Activated CD4-positive, alpha-beta memory T cell treated with anti-CD3 and anti-CD28 coated beads for 36 hours (primary cell): ENCODE measurements at regions of chr4 and their contacts with region 1.

Region 1: GRCh38 chr4:152500800-152501434 is 35.0 kb downstream of the FBXW7 start:
- DNase-seq: peak; percentile 22
- H3K4me3 Mint-ChIP-seq: no peak overlapping the region
- H3K27ac Mint-ChIP-seq: no peak overlapping the region
- H3K4me1 Mint-ChIP-seq: peaks cover 22% of the 10 kb centered on the region
- H3K27me3 Mint-ChIP-seq: no peaks in the 10 kb centered on the region

Region 2: DNA sequence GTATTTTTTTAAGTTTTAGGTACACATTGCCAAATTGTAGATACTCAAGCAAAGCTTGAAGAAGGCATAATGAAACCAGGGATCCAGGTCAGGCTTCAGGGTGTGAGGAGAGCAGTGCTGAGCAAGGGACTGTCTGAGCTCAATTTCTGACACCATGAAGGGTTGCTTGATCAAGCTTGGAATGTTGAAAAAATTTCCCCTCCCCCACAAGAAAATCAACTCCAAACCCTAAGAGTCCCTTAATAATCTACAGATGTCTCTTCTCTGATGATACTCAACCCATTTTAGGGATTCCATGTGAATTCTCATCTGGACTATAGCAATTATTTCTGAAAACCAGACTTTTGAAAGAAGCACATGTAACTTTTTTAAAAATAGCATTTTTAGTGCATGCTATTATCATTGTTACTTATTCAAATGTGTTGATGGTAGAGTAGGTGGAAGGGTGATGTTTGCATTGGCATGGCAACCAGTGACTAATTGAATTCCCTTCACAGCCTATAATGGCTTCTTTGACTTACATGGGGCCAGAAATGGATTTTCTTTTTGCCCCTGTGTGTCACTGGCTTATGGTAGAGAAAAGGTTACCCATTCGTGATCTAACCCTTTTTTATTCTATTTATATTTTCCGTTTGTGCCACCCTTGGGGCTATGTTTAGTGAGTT is 217.0 kb before region 1 on chr4:
- CTCF ChIA-PET with region 1: no interaction called
- POLR2A ChIA-PET with region 1: no interaction called
- intact Hi-C with region 1: no loop called
- DNase-seq: no peak
- H3K4me3 Mint-ChIP-seq: no peak overlapping the region
- H3K27ac Mint-ChIP-seq: no peak overlapping the region
- H3K4me1 Mint-ChIP-seq: peaks cover 19% of the 10 kb centered on the region
- H3K27me3 Mint-ChIP-seq: no peaks in the 10 kb centered on the region

Region 3: DNA sequence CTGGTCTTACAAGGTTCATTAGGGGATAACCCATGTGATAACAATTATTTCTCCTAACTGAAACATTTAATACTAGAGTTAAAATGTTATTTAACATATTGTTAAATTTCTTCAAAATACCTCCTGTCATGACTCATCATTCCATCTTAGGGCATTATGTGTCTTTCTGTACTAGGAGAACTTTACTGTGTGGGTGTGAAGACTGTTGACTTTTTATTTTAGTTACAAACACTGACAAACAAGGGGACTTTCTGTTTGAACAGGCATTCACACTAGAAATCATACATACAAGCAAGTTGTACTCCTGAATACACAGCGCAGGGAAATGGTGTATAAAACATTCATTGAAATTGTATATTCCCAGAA is 140.9 kb before region 1 on chr4:
- CTCF ChIA-PET with region 1: no interaction called
- POLR2A ChIA-PET with region 1: no interaction called
- intact Hi-C with region 1: no loop called
- DNase-seq: no peak
- H3K4me3 Mint-ChIP-seq: no peak overlapping the region
- H3K27ac Mint-ChIP-seq: no peak overlapping the region
- H3K4me1 Mint-ChIP-seq: peaks cover 12% of the 10 kb centered on the region
- H3K27me3 Mint-ChIP-seq: no peaks in the 10 kb centered on the region

Region 4: DNA sequence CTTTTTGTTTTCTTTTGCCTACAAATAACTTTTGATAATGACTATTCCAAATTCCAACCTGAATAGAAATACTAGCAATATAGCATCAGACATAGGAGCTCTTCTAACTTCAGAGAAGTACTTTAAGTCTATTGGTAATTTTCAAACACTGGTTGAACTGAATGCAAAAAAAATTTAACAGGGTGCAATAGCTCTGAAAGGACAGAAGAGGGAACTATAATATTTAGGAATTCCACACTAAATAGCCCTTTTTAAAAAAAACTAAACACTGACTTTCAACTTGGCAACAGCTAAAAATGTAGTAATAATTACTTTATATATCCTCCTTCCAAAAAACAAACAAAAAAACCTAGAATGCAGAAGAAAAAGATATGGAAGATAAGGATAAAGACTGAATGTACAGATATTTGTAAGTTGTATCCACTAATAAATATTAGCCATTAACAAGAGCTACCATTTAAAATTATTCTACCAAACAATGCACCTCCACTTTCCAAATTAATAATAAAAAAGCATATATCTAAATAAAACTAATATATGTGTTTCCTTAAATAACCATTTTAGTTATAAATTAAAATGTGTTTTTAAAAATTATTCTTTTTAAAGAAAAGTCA is 46.4 kb before region 1 on chr4:
- CTCF ChIA-PET with region 1: interaction called, 17 read pairs
- POLR2A ChIA-PET with region 1: no interaction called
- intact Hi-C with region 1: loop called (anchors 5 kb)
- DNase-seq: no peak
- H3K4me3 Mint-ChIP-seq: no peak overlapping the region
- H3K27ac Mint-ChIP-seq: no peak overlapping the region
- H3K4me1 Mint-ChIP-seq: peaks cover 33% of the 10 kb centered on the region
- H3K27me3 Mint-ChIP-seq: no peaks in the 10 kb centered on the region

Region 5: DNA sequence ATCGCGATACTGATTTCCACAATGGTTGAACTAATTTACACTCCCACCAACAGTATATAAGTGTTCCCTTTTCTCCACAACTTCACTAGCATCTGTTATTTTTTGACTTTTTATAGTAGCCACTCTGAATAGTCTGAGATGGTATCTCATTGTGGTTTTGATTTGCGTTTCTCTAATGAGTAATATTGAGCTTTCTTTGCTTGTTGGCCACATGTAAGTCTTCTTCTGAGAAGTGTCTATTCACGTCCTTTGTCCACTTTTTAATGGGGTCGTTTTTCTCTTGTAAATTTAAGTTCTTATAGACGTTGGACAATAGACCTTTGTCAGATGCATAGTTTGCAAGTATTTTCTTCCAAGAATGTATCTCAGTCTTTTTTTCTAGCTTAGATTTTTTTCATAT is 25.0 kb after region 1 on chr4:
- CTCF ChIA-PET with region 1: interaction called, 28 read pairs
- POLR2A ChIA-PET with region 1: interaction called, 3 read pairs
- intact Hi-C with region 1: no loop called
- DNase-seq: no peak
- H3K4me3 Mint-ChIP-seq: no peak overlapping the region
- H3K27ac Mint-ChIP-seq: no peak overlapping the region
- H3K4me1 Mint-ChIP-seq: peaks cover 64% of the 10 kb centered on the region
- H3K27me3 Mint-ChIP-seq: no peaks in the 10 kb centered on the region

Region 6: DNA sequence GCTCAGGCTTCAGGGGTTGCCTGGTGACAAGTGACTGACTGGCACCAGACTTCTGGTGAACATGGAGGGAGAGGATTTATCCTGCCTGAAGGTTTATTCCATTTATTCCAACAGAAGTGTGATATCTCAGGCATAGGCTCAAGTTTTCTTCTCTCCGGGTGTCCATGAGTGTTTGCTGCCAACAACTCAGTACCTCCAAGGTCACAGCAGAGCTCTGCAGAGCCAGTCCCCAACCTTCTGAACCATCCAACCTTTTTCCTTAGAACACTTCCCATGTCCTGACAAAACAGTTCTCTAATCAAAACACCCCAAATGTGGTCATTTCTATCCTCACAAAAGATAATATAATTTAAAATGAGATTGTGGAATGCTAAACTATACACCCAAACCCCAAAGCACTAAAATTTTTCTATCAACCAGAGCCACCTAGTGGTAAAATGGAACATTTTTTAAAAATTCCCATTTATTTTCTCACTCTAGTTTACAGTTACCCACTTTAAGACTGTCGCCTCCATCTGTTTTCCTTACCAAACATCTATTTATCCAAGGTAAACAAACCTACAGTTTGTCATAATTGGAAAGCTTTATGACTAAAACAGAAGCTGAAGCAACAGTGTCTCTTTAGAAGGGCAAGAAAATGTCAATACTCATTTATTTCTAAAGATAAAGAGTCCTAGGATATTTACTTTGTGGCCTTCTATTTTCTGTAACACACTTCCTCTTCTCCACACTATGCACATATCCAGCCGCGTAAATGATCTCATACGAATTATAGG is 139.3 kb after region 1 on chr4:
- CTCF ChIA-PET with region 1: interaction called, 251 read pairs
- POLR2A ChIA-PET with region 1: interaction called, 3 read pairs
- intact Hi-C with region 1: loop called (anchors 1 kb)
- DNase-seq: no peak
- H3K4me3 Mint-ChIP-seq: no peak overlapping the region
- H3K27ac Mint-ChIP-seq: no peak overlapping the region
- H3K4me1 Mint-ChIP-seq: peaks cover 42% of the 10 kb centered on the region
- H3K27me3 Mint-ChIP-seq: no peaks in the 10 kb centered on the region

Region 7: GRCh38 chr4:152779513-152780266 is 278.8 kb after region 1 on chr4 and contains the starts of genes ARFIP1 and TIGD4:
- CTCF ChIA-PET with region 1: interaction called, 11 read pairs
- POLR2A ChIA-PET with region 1: no interaction called
- intact Hi-C with region 1: no loop called
- DNase-seq: peak; percentile 98
- H3K4me3 Mint-ChIP-seq: peak within 1 kb of the TSS; percentile 95
- H3K27ac Mint-ChIP-seq: peak within 1 kb of the TSS; percentile 85
- H3K4me1 Mint-ChIP-seq: peaks cover 34% of the 10 kb centered on the region
- H3K27me3 Mint-ChIP-seq: peaks cover 3% of the 10 kb centered on the region
- total RNA-seq, gene ARFIP1: 9.3 to 10.5 TPM
- total RNA-seq, gene TIGD4: 0.15 to 0.31 TPM

Region 8: GRCh38 chr4:153095448-153096204 is 594.7 kb after region 1 on chr4:
- CTCF ChIA-PET with region 1: no interaction called
- POLR2A ChIA-PET with region 1: no interaction called
- intact Hi-C with region 1: no loop called
- DNase-seq: no peak
- H3K4me3 Mint-ChIP-seq: no peak overlapping the region
- H3K27ac Mint-ChIP-seq: no peak overlapping the region
- H3K4me1 Mint-ChIP-seq: peaks cover 4% of the 10 kb centered on the region
- H3K27me3 Mint-ChIP-seq: no peaks in the 10 kb centered on the region